ENCODE measurements at regions of chr1 and their contacts with region 1.

Region 1: GRCh38 chr1:3618881-3619671 is 5.7 kb upstream of the TPRG1L start:
- DNase-seq: peak; percentile 88
- ATAC-seq: peak; percentile 94
- H3K4me3 Mint-ChIP-seq: peak overlapping the region; percentile 31
- H3K27ac Mint-ChIP-seq: peak overlapping the region; percentile 6
- H3K4me1 Mint-ChIP-seq: peaks cover 23% of the 10 kb centered on the region
- H3K27me3 Mint-ChIP-seq: no peaks in the 10 kb centered on the region
- CTCF ChIP-seq: peak; percentile 92

Region 2: DNA sequence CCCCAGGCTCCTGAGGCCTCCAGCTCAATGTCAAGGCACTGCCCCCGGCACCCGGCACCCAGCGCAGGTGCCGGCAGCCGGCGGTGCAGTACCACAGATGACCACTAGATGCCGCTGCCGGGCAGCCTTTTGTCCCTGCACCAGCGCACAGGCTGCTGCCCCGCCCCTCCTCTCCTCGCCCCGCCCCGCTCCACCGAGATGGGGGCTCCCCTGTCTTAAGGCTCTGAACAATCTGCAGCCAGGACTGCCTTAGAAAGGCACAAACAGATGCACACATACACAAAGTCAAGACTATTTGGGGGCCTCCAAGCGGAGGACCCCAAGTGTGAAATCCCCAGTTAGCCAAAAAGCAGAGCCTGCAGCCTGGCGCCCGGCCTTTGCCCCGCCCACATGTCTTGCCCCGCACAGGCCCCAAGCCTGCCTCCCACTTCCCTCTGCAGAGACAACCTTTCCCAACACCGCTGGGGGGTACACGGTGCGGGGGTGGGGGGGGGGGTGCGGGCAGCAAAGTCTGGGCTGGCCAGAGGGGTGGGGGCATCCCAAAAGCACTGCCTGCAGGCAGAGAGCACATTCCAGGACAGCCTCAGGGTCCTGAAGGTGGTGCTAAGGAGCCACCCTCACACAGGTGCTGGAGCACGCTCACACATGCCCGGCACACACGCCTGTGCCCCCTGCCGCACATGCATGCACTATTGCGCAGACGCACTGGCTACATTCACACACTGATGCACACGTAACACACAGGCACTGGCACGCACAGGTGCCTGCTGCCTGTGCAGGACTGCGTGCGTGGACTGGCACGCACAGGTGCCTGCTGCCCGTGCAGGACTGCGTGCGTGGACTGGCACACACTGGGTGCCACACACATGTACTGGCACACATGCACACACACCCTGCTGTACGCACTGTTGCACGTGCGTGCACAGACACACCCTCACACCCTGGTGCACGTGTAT is 127.5 kb before region 1 on chr1:
- CTCF ChIA-PET with region 1: interaction called, 34 read pairs
- POLR2A ChIA-PET with region 1: no interaction called
- intact Hi-C with region 1: loop called (anchors 2 kb)
- DNase-seq: peak; percentile 91
- ATAC-seq: peak; percentile 98
- H3K4me3 Mint-ChIP-seq: peak overlapping the region; percentile 43
- H3K27ac Mint-ChIP-seq: no peak overlapping the region
- H3K4me1 Mint-ChIP-seq: peaks cover 3% of the 10 kb centered on the region
- H3K27me3 Mint-ChIP-seq: no peaks in the 10 kb centered on the region
- CTCF ChIP-seq: peak; percentile 99

Region 3: DNA sequence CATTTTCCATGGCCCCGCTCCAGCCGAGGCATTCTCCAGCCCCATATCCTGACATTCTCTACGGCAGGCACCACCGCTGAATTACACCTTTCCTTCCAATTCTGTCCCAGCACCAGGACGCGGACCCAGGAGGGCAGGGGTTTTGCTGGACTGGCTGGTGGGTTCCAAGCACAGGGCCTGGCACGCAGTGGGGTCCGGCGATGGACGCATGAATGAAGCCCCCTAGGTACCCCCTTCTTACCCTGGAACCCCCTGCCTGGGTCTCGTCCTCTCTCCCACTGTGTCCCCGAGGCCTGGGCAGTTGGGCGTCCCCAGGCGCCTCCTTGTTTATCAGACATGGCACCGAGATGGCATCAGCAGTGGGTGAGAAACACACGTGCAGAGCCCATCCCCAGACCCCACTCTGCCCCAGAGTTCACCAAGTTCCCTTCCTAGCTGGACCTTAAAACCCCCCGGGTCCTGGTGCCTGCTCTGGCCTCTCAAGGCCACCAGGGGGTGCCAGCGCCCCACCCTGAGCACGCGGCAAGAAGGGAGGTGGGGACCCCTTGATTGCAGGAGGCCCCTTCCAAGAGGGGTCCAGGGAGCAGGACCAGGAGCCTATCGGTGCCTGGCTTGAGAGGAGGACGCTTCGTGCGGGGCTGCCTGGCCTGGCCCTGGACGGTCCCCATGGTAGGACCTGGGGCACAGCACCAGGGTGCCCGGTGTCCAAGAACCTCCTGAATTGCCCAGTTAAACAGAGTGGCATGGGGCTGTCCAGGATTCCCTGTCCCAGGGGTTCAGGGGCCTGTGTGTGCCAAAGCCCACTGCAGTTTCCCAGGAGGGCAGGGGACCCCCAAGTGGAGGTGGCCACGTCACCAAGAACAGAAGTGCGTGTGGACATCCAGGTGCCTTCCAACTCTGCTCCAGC is 53.9 kb before region 1 on chr1:
- CTCF ChIA-PET with region 1: interaction called, 40 read pairs
- POLR2A ChIA-PET with region 1: no interaction called
- intact Hi-C with region 1: loop called (anchors 2 kb)
- DNase-seq: peak; percentile 53
- ATAC-seq: peak; percentile 82
- H3K4me3 Mint-ChIP-seq: no peak overlapping the region
- H3K27ac Mint-ChIP-seq: no peak overlapping the region
- H3K4me1 Mint-ChIP-seq: no peaks in the 10 kb centered on the region
- H3K27me3 Mint-ChIP-seq: no peaks in the 10 kb centered on the region
- CTCF ChIP-seq: peak; percentile 97

Region 4: GRCh38 chr1:3607703-3608065 is 11.4 kb before region 1 on chr1:
- CTCF ChIA-PET with region 1: interaction called, 23 read pairs
- POLR2A ChIA-PET with region 1: no interaction called
- intact Hi-C with region 1: no loop called
- DNase-seq: no peak
- ATAC-seq: no peak
- H3K4me3 Mint-ChIP-seq: no peak overlapping the region
- H3K27ac Mint-ChIP-seq: no peak overlapping the region
- H3K4me1 Mint-ChIP-seq: peaks cover 4% of the 10 kb centered on the region
- H3K27me3 Mint-ChIP-seq: peaks cover 11% of the 10 kb centered on the region
- CTCF ChIP-seq: no peak

Region 5: GRCh38 chr1:3631330-3632262 is 12.5 kb after region 1 on chr1:
- CTCF ChIA-PET with region 1: interaction called, 19 read pairs
- POLR2A ChIA-PET with region 1: no interaction called
- intact Hi-C with region 1: no loop called
- DNase-seq: no peak
- ATAC-seq: no peak
- H3K4me3 Mint-ChIP-seq: no peak overlapping the region
- H3K27ac Mint-ChIP-seq: no peak overlapping the region
- H3K4me1 Mint-ChIP-seq: no peaks in the 10 kb centered on the region
- H3K27me3 Mint-ChIP-seq: no peaks in the 10 kb centered on the region
- CTCF ChIP-seq: no peak